WTC11 (cell line): ENCODE measurements at regions of chr7 and their contacts with region 1.

Region 1: GRCh38 chr7:112869111-112869757 is 79.0 kb upstream of the TMEM168 start:
- DNase-seq: peak; percentile 76
- ATAC-seq: peak; percentile 99
- H3K4me3 Mint-ChIP-seq: no peak overlapping the region
- H3K27ac Mint-ChIP-seq: no peak overlapping the region
- H3K4me1 Mint-ChIP-seq: peaks cover 14% of the 10 kb centered on the region
- H3K27me3 Mint-ChIP-seq: no peaks in the 10 kb centered on the region
- CTCF ChIP-seq: peak; percentile 94

Region 2: GRCh38 chr7:112855227-112855626 is 14.0 kb before region 1 on chr7:
- CTCF ChIA-PET with region 1: interaction called, 15 read pairs
- POLR2A ChIA-PET with region 1: no interaction called
- DNase-seq: no peak
- ATAC-seq: no peak
- H3K4me3 Mint-ChIP-seq: no peak overlapping the region
- H3K27ac Mint-ChIP-seq: no peak overlapping the region
- H3K4me1 Mint-ChIP-seq: peaks cover 11% of the 10 kb centered on the region
- H3K27me3 Mint-ChIP-seq: no peaks in the 10 kb centered on the region
- CTCF ChIP-seq: no peak

Region 3: DNA sequence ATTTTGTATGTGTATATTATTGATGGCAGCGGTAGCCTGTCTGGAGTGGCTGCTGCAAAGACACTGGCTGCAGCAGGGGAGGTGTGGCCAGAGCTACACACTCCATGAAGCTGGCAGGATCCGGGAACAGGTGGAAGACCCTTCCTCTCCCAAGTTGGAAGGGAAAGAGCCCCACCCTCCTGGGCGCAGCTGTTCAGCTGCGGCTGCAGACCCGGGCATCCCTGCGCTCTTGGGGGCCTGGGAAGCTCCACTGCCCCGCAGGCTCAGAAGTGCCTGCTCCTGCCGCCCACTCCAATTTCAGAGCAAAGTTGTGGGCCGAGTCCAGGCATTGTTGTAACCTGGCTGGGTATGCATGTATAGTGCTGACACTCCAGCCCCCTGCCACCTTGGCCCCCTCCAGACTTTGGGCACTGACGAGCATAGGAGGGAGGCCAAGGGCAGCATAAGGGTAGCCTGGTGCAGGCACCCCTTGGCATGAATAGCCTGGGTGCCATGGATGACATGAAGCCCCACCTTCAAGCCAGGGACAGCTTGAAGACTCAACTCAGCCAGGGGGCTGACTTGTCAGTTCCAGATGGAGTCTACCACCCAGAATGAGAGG is 11.7 kb after region 1 on chr7:
- CTCF ChIA-PET with region 1: interaction called, 17 read pairs
- POLR2A ChIA-PET with region 1: no interaction called
- DNase-seq: no peak
- ATAC-seq: no peak
- H3K4me3 Mint-ChIP-seq: no peak overlapping the region
- H3K27ac Mint-ChIP-seq: no peak overlapping the region
- H3K4me1 Mint-ChIP-seq: no peaks in the 10 kb centered on the region; the same call in 1 of the 2 replicates
- H3K27me3 Mint-ChIP-seq: no peaks in the 10 kb centered on the region
- CTCF ChIP-seq: no peak

Region 4: GRCh38 chr7:113289140-113289740 is 420.0 kb after region 1 on chr7:
- CTCF ChIA-PET with region 1: no interaction called
- POLR2A ChIA-PET with region 1: no interaction called
- DNase-seq: no peak
- ATAC-seq: peak; percentile 93
- H3K4me3 Mint-ChIP-seq: no peak overlapping the region
- H3K27ac Mint-ChIP-seq: no peak overlapping the region
- H3K4me1 Mint-ChIP-seq: no peaks in the 10 kb centered on the region
- H3K27me3 Mint-ChIP-seq: no peaks in the 10 kb centered on the region; the same call in 1 of the 2 replicates
- CTCF ChIP-seq: no peak